Psoas muscle (tissue), 8 donors: ENCODE measurements at regions of chr11 and their contacts with region 1.

Region 1: GRCh38 chr11:122150216-122151124 is 34.5 kb upstream of the BLID start:
- DNase-seq: no peak
- ATAC-seq: no peak
- H3K4me3 ChIP-seq: no peak overlapping the region
- H3K27ac ChIP-seq: no peak overlapping the region
- H3K4me1 ChIP-seq: no peaks in the 10 kb centered on the region
- H3K27me3 ChIP-seq: no peaks in the 10 kb centered on the region
- CTCF ChIP-seq: no peak

Region 2: DNA sequence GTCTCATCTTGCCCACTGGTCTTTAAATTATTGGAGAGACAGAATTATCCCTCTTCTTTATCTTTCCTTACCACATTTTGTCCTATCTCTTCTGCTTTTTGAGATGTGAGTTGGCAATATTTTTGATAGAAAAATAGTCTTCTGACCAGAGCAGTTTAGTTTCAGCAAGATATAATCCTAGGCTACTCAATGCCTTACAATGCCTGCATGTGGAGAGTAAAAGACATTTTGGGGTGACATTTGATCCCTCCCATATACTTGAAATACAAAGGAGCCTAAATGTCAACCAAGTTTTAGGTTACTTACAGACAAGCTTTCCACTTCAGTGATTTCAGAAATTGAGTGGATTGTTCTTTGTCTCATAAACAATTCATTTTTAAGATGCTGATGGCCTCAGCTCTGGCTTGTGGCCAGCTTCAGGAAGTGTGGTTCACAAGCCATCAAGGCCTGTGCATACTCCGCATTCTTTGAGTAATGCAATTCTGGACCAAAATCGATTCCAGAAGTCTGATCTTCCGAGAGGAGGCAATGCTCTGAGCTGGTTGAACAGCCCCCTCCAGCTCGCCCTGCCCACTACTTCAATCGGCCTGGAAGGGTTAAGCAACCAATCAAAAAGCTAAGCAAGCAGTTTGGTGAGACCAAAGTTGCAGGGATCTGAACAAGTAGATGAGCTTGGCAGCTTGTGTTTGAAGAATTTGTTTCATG is 308.8 kb before region 1 on chr11:
- intact Hi-C with region 1: no loop called
- DNase-seq: no peak
- ATAC-seq: no peak
- H3K4me3 ChIP-seq: no peak overlapping the region
- H3K27ac ChIP-seq: no peak overlapping the region
- H3K4me1 ChIP-seq: no peaks in the 10 kb centered on the region
- H3K27me3 ChIP-seq: no peaks in the 10 kb centered on the region
- CTCF ChIP-seq: no peak

Region 3: GRCh38 chr11:122108192-122108799 is 42.2 kb before region 1 on chr11:
- intact Hi-C with region 1: loop called in 1 of 2 experiments (anchors 5 kb)
- DNase-seq: no peak
- ATAC-seq: peak; percentile 35 to 51 (median 50)
- H3K4me3 ChIP-seq: no peak overlapping the region
- H3K27ac ChIP-seq: peak overlapping the region; percentile 84
- H3K4me1 ChIP-seq: peaks cover 6% of the 10 kb centered on the region
- H3K27me3 ChIP-seq: no peaks in the 10 kb centered on the region
- CTCF ChIP-seq: peak; percentile 52

Region 4: GRCh38 chr11:122115524-122116379 is 34.7 kb before region 1 on chr11 and contains the start of gene BLID:
- intact Hi-C with region 1: loop called in 1 of 2 experiments (anchors 5 kb)
- DNase-seq: peak; percentile 21 to 63
- ATAC-seq: peak; percentile 13 to 88 (median 54)
- H3K4me3 ChIP-seq: no peak within 1 kb of the TSS
- H3K27ac ChIP-seq: no peak within 1 kb of the TSS
- H3K4me1 ChIP-seq: no peaks in the 10 kb centered on the region
- H3K27me3 ChIP-seq: no peaks in the 10 kb centered on the region
- CTCF ChIP-seq: peak; percentile 31
- total RNA-seq, gene BLID: 0.45 TPM in 1 of 4 donors, not detected in the others